Endothelial cell of umbilical vein (primary cell): ENCODE measurements at regions of chr7 and their contacts with region 1.

Region 1: GRCh38 chr7:70553364-70553763 is 578.6 kb upstream of the GALNT17 start:
- DNase-seq: no peak
- H3K4me3 ChIP-seq: no peak overlapping the region
- H3K27ac ChIP-seq: no peak overlapping the region
- H3K4me1 ChIP-seq: no peaks in the 10 kb centered on the region
- H3K27me3 ChIP-seq: no peaks in the 10 kb centered on the region
- CTCF ChIP-seq: no peak
- POLR2A ChIP-seq: no peak

Region 2: GRCh38 chr7:70035519-70035918 is 517.8 kb before region 1 on chr7:
- CTCF ChIA-PET with region 1: no interaction called
- POLR2A ChIA-PET with region 1: interaction called, 10 read pairs
- dilution Hi-C with region 1: no loop called
- intact Hi-C with region 1: no loop called
- DNase-seq: no peak
- H3K4me3 ChIP-seq: no peak overlapping the region
- H3K27ac ChIP-seq: no peak overlapping the region
- H3K4me1 ChIP-seq: no peaks in the 10 kb centered on the region
- H3K27me3 ChIP-seq: no peaks in the 10 kb centered on the region
- CTCF ChIP-seq: no peak
- POLR2A ChIP-seq: no peak

Region 3: DNA sequence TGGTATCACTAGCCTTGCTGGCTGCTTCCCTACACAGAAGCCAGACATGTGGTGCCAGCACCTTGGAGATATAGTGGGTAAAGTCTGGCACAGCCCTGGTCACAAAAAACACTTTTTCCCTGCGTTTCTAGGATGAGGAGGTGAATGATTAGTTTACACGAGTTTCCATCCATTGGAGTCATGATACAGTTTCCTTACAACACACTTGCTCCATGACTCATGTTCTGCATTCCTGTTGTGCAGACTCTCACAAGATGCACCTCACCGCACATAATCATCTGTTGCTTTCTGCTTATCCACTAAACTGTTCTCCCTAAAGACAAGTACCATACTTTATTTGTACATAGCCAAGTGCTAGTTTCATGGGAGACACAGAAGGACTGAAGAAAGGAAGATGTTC is 168.5 kb before region 1 on chr7:
- CTCF ChIA-PET with region 1: no interaction called
- POLR2A ChIA-PET with region 1: no interaction called
- dilution Hi-C with region 1: no loop called
- intact Hi-C with region 1: no loop called
- DNase-seq: no peak
- H3K4me3 ChIP-seq: no peak overlapping the region
- H3K27ac ChIP-seq: no peak overlapping the region
- H3K4me1 ChIP-seq: no peaks in the 10 kb centered on the region
- H3K27me3 ChIP-seq: no peaks in the 10 kb centered on the region
- CTCF ChIP-seq: no peak
- POLR2A ChIP-seq: no peak

Region 4: DNA sequence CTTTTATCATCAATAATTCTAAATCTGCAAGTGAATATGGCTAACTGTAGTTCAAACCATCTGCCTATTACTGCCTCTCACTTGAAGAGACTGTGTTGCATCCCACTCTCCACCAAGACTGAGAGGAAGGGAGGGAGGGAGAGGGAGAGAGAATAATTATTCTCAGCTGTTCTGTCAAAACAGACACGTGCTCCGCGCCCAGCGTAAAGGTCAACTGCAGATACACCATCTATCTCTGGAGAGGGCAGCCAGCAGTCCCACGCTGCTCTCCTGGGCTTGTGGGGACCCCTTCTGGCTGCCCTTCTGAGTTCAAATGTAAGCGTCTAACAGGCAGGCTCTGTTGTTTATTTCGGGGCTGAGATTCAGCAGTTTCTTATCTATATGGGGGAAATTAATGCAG is 46.9 kb before region 1 on chr7:
- CTCF ChIA-PET with region 1: no interaction called
- POLR2A ChIA-PET with region 1: no interaction called
- dilution Hi-C with region 1: no loop called
- intact Hi-C with region 1: no loop called
- DNase-seq: no peak
- H3K4me3 ChIP-seq: no peak overlapping the region
- H3K27ac ChIP-seq: no peak overlapping the region
- H3K4me1 ChIP-seq: no peaks in the 10 kb centered on the region
- H3K27me3 ChIP-seq: no peaks in the 10 kb centered on the region
- CTCF ChIP-seq: no peak
- POLR2A ChIP-seq: no peak

Region 5: GRCh38 chr7:70574970-70575799 is 21.8 kb after region 1 on chr7:
- CTCF ChIA-PET with region 1: no interaction called
- POLR2A ChIA-PET with region 1: no interaction called
- dilution Hi-C with region 1: no loop called
- intact Hi-C with region 1: no loop called
- DNase-seq: no peak
- H3K4me3 ChIP-seq: no peak overlapping the region
- H3K27ac ChIP-seq: no peak overlapping the region
- H3K4me1 ChIP-seq: no peaks in the 10 kb centered on the region
- H3K27me3 ChIP-seq: no peaks in the 10 kb centered on the region
- CTCF ChIP-seq: no peak
- POLR2A ChIP-seq: no peak